ENCODE measurements at regions of chr9 and their contacts with region 1.

Region 1: GRCh38 chr9:7834531-7834930 is 35.0 kb upstream of the DMAC1 start:
- DNase-seq: no peak
- ATAC-seq: no peak

Region 2: DNA sequence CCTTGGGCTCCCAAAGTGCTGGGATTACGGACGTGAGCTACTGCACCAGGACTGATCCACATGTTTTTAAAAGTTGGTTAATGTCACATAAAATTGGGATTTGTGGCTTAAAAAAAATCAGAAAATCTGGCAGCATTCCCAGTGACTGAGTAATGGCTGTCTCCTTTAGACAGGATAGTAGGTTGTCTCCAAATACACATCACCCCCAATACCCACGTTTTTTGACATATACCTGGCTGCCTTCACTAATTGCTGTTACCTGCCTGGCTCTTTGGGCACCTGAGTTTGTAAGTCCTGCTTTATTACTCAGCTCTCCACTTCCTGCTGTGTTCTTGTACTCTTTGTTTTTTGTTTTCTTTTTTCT is 992.0 kb before region 1 on chr9:
- intact Hi-C with region 1: loop called (anchors 5 kb)
- DNase-seq: no peak
- ATAC-seq: no peak